A673 (cell line): ENCODE measurements at regions of chr5 and their contacts with region 1.

Region 1: DNA sequence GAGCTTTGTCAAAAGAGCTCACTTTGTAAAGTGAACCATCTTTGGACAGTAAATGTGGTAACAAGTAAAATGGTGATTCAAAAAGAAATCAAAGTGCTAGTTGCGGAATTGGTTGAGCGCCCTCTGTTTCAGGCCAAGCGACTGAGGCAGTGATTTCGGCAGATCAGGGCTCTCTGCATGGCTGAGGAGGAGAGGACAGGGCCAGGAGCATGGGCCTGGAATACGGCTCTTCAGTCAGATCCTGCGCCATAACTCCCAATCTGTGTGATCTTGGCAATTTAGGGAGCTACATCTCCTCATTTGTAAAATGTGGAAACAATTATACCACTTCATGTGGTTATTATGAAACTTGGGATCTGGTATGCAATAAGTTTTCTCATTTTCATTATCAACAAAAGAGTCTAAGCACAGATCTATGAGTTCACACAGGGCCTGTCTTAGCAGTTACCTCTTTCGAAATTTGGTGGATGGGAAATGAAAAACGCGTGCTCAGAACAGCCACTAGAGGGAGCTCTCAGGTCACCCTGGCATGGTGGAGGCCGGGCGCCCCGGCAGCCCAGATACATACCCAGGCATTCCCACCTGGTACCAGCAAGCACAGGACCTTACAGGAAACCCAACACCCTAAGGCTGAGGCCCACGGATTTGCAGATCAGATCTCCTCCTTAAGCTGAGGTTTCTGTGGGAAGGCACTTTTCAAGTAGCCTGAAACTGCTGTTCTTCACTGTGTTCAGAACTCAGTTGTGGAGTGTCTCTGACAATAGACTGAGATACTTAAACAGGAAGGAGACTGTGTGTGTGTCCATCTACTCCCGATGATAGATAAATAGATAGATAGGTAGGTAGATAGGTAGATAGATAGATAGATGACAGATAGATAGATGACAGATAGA is 303.7 kb downstream of the RAB3C start:
- DNase-seq: peak; percentile 70
- H3K4me3 ChIP-seq: no peak overlapping the region
- H3K27ac ChIP-seq: no peak overlapping the region
- H3K4me1 ChIP-seq: no peaks in the 10 kb centered on the region
- H3K27me3 ChIP-seq: no peaks in the 10 kb centered on the region
- CTCF ChIP-seq: peak; percentile 96

Region 2: GRCh38 chr5:58477760-58478376 is 408.7 kb before region 1 on chr5:
- CTCF ChIA-PET with region 1: no interaction called
- POLR2A ChIA-PET with region 1: no interaction called
- intact Hi-C with region 1: no loop called
- DNase-seq: no peak
- H3K4me3 ChIP-seq: no peak overlapping the region
- H3K27ac ChIP-seq: no peak overlapping the region
- H3K4me1 ChIP-seq: no peaks in the 10 kb centered on the region
- H3K27me3 ChIP-seq: no peaks in the 10 kb centered on the region
- CTCF ChIP-seq: peak; percentile 43; the same call in 1 of the 2 replicates

Region 3: DNA sequence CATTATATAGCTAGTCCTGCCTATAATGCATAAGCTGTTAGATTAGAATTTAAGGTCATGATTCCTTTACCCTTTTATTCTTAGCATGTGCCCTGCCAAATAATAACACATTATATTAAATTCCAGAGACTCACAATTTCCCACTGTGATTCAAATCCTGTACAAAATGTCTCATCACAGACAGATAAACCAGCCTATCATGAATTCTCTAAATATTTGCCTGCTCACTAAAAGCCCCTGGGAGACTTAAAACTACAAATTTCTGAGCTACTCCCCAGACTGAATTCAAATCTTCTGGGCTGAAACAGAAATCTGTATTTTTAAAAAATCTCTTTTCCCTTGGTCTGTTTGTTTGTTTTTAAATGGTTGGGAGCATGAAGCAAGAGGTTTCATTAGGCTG is 362.6 kb before region 1 on chr5:
- CTCF ChIA-PET with region 1: no interaction called
- POLR2A ChIA-PET with region 1: no interaction called
- intact Hi-C with region 1: no loop called
- DNase-seq: no peak
- H3K4me3 ChIP-seq: no peak overlapping the region
- H3K27ac ChIP-seq: no peak overlapping the region
- H3K4me1 ChIP-seq: peaks cover 6% of the 10 kb centered on the region
- H3K27me3 ChIP-seq: no peaks in the 10 kb centered on the region
- CTCF ChIP-seq: no peak

Region 4: GRCh38 chr5:58925627-58926540 is 39.3 kb after region 1 on chr5:
- CTCF ChIA-PET with region 1: interaction called, 13 read pairs
- POLR2A ChIA-PET with region 1: no interaction called
- intact Hi-C with region 1: no loop called
- DNase-seq: peak; percentile 22
- H3K4me3 ChIP-seq: no peak overlapping the region
- H3K27ac ChIP-seq: no peak overlapping the region
- H3K4me1 ChIP-seq: no peaks in the 10 kb centered on the region
- H3K27me3 ChIP-seq: peaks cover 8% of the 10 kb centered on the region
- CTCF ChIP-seq: no peak

Region 5: DNA sequence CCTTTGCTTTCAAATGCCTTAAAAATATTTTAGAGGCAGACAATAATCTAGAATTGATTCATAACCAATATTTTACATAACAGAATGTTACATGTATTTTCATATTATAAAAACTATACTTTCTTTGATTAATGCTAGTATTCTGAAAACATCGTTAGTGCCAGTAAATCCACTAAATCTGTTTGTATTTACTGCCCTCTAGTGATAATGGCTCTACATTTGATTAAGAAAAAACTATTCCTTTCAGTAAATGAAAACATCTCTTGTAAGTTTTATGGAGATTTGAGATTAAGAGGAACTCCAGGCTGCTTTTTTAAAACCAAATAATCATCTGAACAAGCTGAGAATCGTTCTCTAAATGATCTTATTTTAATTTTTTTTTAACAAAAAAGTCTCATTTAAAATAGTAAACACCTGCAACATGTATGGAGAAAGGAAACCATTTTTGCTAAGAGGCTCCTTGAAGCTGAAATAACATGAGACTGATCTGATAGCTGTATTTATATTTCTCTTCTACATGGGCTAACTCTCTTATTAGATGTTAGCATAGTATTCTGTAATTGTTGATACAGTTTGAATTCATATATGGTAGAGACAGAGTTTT is 121.0 kb after region 1 on chr5:
- CTCF ChIA-PET with region 1: interaction called, 5 read pairs
- POLR2A ChIA-PET with region 1: no interaction called
- intact Hi-C with region 1: loop called (anchors 1 kb)
- DNase-seq: peak; percentile 56
- H3K4me3 ChIP-seq: no peak overlapping the region
- H3K27ac ChIP-seq: no peak overlapping the region
- H3K4me1 ChIP-seq: no peaks in the 10 kb centered on the region
- H3K27me3 ChIP-seq: no peaks in the 10 kb centered on the region
- CTCF ChIP-seq: peak; percentile 73

Region 6: DNA sequence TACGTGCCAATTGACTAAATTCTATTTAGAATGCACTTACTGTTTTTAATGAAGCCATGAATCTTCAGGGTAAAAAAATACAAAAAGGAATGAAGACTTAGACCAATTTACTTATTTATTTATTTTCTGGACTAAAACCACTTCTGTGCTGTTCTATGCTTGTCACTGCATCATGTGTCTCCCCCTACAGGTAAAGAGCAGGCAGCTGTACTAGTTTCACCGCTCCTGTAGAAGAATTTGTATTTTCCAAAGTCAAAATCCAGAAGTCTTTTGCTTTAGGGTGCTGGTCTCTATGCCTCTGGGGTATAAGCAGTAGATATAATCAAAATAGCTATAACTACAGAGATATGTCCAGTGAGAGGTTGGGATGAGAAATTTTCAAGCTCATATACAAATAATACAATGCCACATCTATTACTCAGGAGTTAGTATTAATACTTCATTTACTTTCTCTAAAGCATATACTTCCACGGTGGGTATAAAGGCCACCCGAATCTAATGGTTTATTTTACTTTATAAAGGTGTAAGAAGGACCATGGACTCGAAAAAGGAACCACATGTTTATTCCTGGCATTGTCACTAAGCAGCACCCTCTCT is 287.8 kb after region 1 on chr5:
- CTCF ChIA-PET with region 1: interaction called, 4 read pairs
- POLR2A ChIA-PET with region 1: no interaction called
- intact Hi-C with region 1: loop called (anchors 2 kb)
- DNase-seq: peak; percentile 80
- H3K4me3 ChIP-seq: no peak overlapping the region
- H3K27ac ChIP-seq: no peak overlapping the region
- H3K4me1 ChIP-seq: no peaks in the 10 kb centered on the region
- H3K27me3 ChIP-seq: no peaks in the 10 kb centered on the region
- CTCF ChIP-seq: peak; percentile 93

Region 7: DNA sequence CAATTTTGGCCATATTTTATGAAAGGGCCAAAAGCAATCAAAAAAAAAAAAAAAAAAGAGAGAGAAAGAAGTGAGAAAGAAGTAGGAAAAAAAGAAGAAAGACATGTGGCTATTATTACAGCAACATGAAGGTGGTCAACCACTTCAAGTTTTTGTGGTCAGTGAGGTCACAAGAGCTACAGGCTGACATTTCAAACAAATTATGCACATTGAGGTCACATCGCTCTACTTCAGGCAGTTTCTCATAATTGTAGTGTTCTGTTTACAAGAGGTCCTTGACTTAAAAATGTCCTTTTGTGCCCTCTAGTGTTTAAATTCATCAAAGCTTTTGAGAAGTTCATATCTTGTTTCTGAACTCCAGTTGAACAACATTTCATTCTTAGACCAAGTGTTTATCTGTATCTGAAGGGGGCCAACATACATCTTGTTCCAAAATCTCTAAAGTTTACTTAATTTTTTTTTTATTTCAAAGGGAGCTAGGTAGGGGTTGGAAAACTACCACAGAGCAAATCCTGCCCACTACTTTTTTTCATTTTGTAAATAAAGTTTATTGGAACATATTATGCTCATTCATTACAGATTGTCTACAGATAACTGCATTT is 493.9 kb after region 1 on chr5:
- CTCF ChIA-PET with region 1: no interaction called
- POLR2A ChIA-PET with region 1: no interaction called
- intact Hi-C with region 1: loop called (anchors 5 kb)
- DNase-seq: peak; percentile 63
- H3K4me3 ChIP-seq: no peak overlapping the region
- H3K27ac ChIP-seq: no peak overlapping the region
- H3K4me1 ChIP-seq: no peaks in the 10 kb centered on the region
- H3K27me3 ChIP-seq: no peaks in the 10 kb centered on the region
- CTCF ChIP-seq: peak; percentile 61